ENCODE measurements at regions of chr22 and their contacts with region 1.

Region 1: DNA sequence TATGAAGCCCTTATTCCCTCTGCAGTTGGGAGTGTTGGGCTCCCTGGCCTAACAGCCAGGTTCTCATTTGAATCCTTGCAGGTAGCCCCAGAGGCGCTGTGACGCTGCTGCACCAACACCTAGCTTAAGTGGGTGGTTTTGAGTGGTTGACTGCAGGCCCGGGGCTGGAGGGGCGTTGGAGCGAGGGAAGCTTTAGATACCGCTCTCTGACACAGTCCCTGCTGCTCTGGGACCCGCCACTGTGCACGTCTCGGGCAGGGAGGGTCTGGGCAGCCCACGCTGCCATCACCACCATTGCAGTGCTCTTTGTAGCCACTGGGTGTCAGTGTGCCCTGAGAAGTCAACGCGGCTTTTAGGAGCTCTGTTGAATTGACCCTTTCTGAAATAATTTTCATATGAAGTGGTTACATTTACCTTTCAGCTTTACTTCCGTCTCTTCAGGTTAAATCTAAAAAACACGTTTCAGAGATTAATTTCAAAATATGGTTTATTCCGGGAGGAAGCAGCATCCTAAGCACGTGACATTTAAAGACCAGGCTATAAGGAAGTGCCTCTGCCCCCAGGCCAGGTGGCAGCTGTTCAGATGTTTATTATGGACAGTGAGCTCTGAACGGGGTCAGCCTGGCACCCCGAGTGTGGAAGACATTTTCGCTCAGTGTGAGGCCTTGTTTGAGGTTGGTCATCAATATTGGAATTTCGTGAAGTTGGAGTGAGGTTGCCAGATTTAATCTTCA is 30.9 kb upstream of the PARVB start:
- DNase-seq: peak; percentile 82

Region 2: DNA sequence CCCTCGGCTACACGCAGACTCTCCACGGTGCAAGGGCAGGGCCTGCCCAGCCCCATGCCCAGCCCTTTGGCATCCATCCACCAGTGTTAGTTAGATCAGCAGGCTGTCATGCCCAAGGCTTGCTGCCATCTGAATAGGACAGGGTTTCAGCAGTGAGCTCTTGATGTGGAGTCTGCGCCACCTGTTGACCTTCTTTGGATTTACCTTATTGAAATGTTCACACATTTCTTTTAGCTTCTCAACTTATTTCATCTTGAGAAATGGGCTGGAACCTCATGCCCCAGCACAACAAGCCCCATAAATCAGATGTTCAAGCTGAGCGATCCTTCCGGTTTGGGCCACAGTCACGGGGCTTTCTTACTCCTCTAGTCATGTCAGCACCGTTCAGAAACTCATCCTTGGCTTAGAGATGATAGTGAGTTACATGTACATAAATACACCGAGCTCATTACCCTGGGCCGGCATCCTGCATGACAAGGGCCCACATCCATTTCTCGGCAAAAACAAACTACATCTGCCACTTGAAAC is 92.6 kb after region 1 on chr22:
- CTCF ChIA-PET with region 1: interaction called, 16 read pairs
- POLR2A ChIA-PET with region 1: interaction called, 3 read pairs
- DNase-seq: peak; percentile 40